Caco-2 (cell line): ENCODE measurements at regions of chr20 and their contacts with region 1.

Region 1: GRCh38 chr20:1965520-1966351 is 28.1 kb downstream of the PDYN start:
- DNase-seq: peak; percentile 74 to 87
- H3K4me3 ChIP-seq: no peak overlapping the region
- H3K4me3 Mint-ChIP-seq: peak overlapping the region; percentile 12
- H3K27ac Mint-ChIP-seq: no peak overlapping the region
- H3K4me1 ChIP-seq: no peaks in the 10 kb centered on the region
- H3K4me1 Mint-ChIP-seq: peaks cover 7% of the 10 kb centered on the region
- H3K27me3 ChIP-seq: no peaks in the 10 kb centered on the region
- H3K27me3 Mint-ChIP-seq: peaks cover 20% of the 10 kb centered on the region
- CTCF ChIP-seq: peak; percentile 93 to 97

Region 2: GRCh38 chr20:2093159-2093781 is 127.5 kb after region 1 on chr20:
- CTCF ChIA-PET with region 1: interaction called, 11 read pairs
- POLR2A ChIA-PET with region 1: interaction called, 3 read pairs
- intact Hi-C with region 1: loop called (anchors 1 kb)
- DNase-seq: peak; percentile 62 to 67
- H3K4me3 ChIP-seq: no peak overlapping the region
- H3K4me3 Mint-ChIP-seq: no peak overlapping the region
- H3K27ac Mint-ChIP-seq: no peak overlapping the region
- H3K4me1 ChIP-seq: no peaks in the 10 kb centered on the region
- H3K4me1 Mint-ChIP-seq: no peaks in the 10 kb centered on the region
- H3K27me3 ChIP-seq: no peaks in the 10 kb centered on the region; the same call in 1 of the 2 replicates
- H3K27me3 Mint-ChIP-seq: peaks cover 21% of the 10 kb centered on the region
- CTCF ChIP-seq: peak; percentile 69 to 89

Region 3: DNA sequence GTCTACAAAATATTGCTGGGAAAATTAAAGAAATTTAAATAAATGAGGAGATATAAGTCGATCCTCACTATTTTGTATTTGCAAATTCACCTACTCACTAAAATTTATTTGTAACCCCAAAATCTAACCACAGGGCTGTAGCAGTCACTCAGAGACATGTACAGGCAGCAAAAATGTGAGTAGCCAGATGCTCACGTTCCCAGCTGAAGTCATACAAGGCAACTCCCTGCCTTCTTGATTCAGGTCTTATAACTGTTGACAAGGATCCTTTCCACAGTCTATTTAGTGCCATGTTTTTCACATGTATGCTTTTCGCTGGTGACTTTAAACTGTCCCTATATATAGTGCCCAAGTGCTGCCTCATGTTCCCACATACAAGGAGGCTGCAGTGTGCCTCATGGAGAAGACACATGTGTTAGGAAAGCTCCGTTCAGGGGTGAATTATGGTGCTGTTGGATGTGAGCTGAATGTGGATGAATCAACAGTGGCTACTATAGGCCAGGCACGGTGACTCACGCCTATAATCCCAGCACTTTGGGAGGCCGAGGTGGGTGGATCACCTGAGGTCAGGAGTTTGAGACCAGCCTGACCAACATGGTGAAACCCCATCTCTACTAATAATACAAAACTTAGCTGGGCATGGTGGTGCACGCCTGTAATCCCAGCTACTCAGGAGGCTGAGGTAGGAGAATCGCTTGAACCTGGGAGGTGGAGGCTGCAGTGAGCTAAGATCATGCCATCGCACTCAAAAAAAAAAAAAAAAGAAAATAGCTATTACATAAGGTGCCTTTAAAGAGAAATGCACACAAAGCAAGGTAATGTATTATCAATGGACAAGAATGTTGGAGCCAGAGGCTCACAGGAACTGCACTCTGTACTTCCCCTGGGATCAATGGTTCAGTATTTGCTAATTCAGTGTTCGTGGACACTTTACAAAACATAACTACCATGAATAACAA is 191.2 kb after region 1 on chr20:
- CTCF ChIA-PET with region 1: no interaction called
- POLR2A ChIA-PET with region 1: no interaction called
- intact Hi-C with region 1: loop called (anchors 5 kb)
- DNase-seq: no peak
- H3K4me3 ChIP-seq: no peak overlapping the region
- H3K4me3 Mint-ChIP-seq: no peak overlapping the region
- H3K27ac Mint-ChIP-seq: no peak overlapping the region
- H3K4me1 ChIP-seq: no peaks in the 10 kb centered on the region
- H3K4me1 Mint-ChIP-seq: no peaks in the 10 kb centered on the region
- H3K27me3 ChIP-seq: no peaks in the 10 kb centered on the region
- H3K27me3 Mint-ChIP-seq: peaks cover 2% of the 10 kb centered on the region
- CTCF ChIP-seq: no peak